Calu3 (cell line): ENCODE measurements at regions of chr4 and their contacts with region 1.

Region 1: GRCh38 chr4:80365928-80366327 is 30.4 kb downstream of the CFAP299 start:
- DNase-seq: peak; percentile 52
- H3K4me3 Mint-ChIP-seq: no peak overlapping the region
- H3K27ac Mint-ChIP-seq: no peak overlapping the region
- H3K4me1 Mint-ChIP-seq: peaks cover 8% of the 10 kb centered on the region
- H3K27me3 Mint-ChIP-seq: no peaks in the 10 kb centered on the region
- CTCF ChIP-seq: peak; percentile 33

Region 2: DNA sequence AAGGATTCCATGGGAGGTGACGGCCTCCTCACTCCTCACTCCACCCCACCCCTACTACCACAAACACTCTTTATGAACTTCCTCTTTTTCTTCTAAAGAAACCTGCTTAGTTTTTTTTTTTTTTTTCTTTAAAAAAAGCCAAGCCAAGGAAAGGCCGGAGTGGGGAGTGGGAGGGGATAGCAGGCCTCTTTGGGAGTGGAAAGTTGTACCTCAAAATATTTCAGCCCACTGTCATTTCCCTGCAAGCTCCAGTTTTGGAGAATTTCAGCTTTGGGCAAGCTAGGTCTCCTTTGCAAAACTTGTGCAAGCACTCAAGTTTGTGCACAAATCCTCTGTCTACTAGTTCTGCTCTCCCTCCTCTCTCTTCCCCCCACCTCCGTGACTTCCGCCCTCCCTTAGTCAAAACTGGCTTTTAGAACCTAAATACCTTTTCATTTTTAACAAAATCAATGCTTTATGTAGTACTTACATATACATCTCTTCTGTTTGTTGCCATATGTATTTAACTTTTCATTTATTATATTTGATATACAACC is 292.4 kb before region 1 on chr4:
- CTCF ChIA-PET with region 1: no interaction called
- intact Hi-C with region 1: no loop called
- DNase-seq: no peak
- H3K4me3 Mint-ChIP-seq: peak overlapping the region; percentile 95
- H3K27ac Mint-ChIP-seq: no peak overlapping the region
- H3K4me1 Mint-ChIP-seq: peaks cover 10% of the 10 kb centered on the region
- H3K27me3 Mint-ChIP-seq: no peaks in the 10 kb centered on the region
- CTCF ChIP-seq: no peak

Region 3: GRCh38 chr4:80201252-80202151 is 164.4 kb before region 1 on chr4:
- CTCF ChIA-PET with region 1: no interaction called
- intact Hi-C with region 1: no loop called
- DNase-seq: peak; percentile 24
- H3K4me3 Mint-ChIP-seq: peak overlapping the region; percentile 69
- H3K27ac Mint-ChIP-seq: no peak overlapping the region
- H3K4me1 Mint-ChIP-seq: peaks cover 7% of the 10 kb centered on the region
- H3K27me3 Mint-ChIP-seq: no peaks in the 10 kb centered on the region
- CTCF ChIP-seq: no peak

Region 4: GRCh38 chr4:80619070-80619674 is 253.2 kb after region 1 on chr4:
- CTCF ChIA-PET with region 1: no interaction called
- intact Hi-C with region 1: loop called (anchors 2 kb)
- DNase-seq: peak; percentile 5
- H3K4me3 Mint-ChIP-seq: no peak overlapping the region
- H3K27ac Mint-ChIP-seq: no peak overlapping the region
- H3K4me1 Mint-ChIP-seq: no peaks in the 10 kb centered on the region
- H3K27me3 Mint-ChIP-seq: no peaks in the 10 kb centered on the region
- CTCF ChIP-seq: peak; percentile 12

Region 5: DNA sequence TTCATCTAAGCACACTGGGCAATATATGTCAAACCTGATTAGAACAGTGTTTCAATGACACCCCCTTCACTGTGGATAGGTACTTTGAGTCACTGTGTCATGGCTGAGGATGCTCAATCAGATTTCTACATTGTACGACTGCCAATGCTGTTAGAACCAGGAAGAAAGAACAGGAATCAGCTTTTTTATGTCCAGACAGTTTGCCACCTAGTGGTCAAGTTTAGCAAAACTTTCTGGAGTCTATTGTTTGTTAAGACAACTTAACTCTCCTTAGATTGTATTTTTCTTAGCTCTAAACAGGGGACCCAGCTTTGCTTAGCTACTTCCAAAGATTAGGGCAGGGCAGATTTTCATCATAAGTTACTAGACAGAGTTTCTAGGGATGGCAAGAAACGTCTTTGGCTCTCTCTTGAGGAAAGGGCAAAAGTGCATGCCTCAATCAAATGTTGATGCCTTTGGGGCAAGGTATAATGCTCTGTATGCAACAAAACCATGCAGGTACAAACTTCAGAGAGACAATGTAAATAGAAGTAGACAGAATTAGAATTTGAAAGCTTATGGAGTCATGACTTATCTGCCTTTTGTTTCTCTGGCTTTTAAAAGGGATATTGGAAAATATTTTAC is 624.1 kb after region 1 on chr4:
- CTCF ChIA-PET with region 1: no interaction called
- intact Hi-C with region 1: loop called (anchors 1 kb)
- DNase-seq: peak; percentile 44
- H3K4me3 Mint-ChIP-seq: no peak overlapping the region
- H3K27ac Mint-ChIP-seq: no peak overlapping the region
- H3K4me1 Mint-ChIP-seq: no peaks in the 10 kb centered on the region
- H3K27me3 Mint-ChIP-seq: no peaks in the 10 kb centered on the region
- CTCF ChIP-seq: peak; percentile 51

Region 6: DNA sequence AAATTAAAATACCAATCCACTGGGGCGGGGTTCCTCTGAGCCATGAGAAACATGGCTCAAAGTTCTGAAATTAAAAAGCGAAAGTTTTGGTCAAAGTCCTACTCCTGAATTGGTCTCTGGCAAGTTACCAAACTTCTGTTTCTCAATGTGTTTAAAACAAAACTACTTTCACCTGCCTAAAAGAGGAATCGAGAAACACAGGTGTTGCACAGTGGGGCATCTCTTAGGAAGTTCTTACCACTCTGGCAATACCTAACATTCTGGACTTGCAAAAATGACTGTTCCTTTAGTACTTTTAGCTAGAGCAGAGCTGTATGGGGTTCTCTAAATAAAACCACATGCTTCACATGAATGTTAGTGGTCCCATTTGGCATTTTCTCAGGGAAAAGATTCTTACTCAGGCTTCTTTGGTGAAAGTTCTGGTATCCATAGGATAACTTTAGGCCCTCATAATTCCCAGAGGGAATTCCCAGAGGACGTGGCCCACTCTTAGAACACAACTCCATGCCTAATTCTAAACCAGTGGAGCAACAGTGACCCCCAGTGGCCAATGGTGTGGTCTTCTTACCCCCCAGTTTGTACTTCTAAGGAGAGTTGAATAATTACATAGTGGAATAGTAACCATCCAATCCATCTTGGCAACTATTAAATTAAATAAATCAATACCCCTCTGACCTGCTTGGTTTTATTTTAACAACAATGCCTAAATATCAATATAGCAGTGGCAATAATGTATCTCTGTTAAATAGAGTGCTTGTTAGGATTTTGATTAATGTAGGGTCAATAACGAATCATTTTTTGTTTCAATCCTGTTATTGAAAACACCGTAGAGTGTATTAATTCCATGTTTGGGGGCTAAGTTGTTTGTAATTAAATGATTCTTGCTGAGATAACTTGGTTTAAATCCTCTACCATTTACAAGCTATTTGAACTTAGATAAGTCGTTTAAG is 686.5 kb after region 1 on chr4:
- CTCF ChIA-PET with region 1: interaction called, 11 read pairs
- intact Hi-C with region 1: loop called (anchors 1 kb)
- DNase-seq: peak; percentile 72
- H3K4me3 Mint-ChIP-seq: no peak overlapping the region
- H3K27ac Mint-ChIP-seq: no peak overlapping the region
- H3K4me1 Mint-ChIP-seq: no peaks in the 10 kb centered on the region
- H3K27me3 Mint-ChIP-seq: no peaks in the 10 kb centered on the region
- CTCF ChIP-seq: peak; percentile 61